Breast epithelium (tissue), 4 donors: ENCODE measurements at regions of chr13 and their contacts with region 1.

Region 1: DNA sequence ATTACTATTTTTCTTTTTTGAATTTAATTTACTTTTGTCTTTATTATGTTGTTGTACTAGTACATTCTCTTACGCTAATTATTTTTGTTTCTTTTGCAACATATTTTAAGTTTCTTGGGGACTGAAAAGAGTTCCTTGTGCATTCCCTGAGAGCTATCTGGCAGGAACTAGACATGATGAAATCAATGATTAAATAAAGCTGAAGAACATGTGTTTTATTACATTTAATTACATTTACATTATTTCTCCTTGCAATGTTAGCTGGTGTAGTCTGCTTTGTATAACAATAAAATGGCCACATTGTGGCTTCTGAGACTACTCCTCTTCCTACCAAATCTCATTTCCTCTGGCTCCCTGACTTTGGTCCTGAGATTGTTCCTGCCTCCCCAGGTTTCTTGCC is 244.9 kb downstream of the NDFIP2 start:
- DNase-seq: no peak
- H3K4me3 ChIP-seq: no peak overlapping the region
- H3K27ac ChIP-seq: no peak overlapping the region
- H3K4me1 ChIP-seq: no peaks in the 10 kb centered on the region
- H3K27me3 ChIP-seq: no peaks in the 10 kb centered on the region
- CTCF ChIP-seq: no peak
- POLR2A ChIP-seq: no peak

Region 2: DNA sequence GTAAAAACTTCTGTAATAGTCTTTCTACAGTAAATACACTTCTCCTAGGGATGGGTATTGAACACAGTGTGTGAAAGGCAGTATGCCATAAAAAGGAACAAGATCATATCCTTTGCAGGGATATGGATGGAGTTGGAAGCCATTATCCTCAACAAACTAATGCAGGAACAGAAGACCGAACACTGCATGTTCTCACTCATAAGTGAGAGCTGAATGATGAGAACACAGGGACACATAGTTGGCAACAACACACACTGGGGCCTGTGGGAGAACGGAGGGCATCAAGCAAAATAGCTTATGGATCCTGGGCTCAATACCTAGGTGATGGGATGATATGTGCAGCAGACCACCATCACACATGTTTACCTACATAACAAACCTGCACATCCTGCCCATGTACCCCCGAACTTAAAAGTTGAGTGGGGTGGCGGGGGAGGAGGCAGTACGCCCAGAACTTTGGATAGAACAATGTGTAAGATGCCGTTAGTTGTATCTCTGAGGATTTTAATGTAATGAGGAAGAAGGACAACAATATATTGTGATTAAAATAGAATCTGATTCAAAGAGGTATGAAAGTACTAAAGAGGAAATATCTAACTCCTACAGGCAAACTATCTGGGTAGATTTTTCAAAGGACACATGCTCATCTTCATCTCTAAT is 61.7 kb before region 1 on chr13:
- intact Hi-C with region 1: loop called (anchors 2 kb)
- DNase-seq: no peak
- H3K4me3 ChIP-seq: no peak overlapping the region
- H3K27ac ChIP-seq: no peak overlapping the region
- H3K4me1 ChIP-seq: no peaks in the 10 kb centered on the region
- H3K27me3 ChIP-seq: no peaks in the 10 kb centered on the region
- CTCF ChIP-seq: no peak
- POLR2A ChIP-seq: no peak